ENCODE measurements at regions of chr1 and their contacts with region 1.

Region 1: DNA sequence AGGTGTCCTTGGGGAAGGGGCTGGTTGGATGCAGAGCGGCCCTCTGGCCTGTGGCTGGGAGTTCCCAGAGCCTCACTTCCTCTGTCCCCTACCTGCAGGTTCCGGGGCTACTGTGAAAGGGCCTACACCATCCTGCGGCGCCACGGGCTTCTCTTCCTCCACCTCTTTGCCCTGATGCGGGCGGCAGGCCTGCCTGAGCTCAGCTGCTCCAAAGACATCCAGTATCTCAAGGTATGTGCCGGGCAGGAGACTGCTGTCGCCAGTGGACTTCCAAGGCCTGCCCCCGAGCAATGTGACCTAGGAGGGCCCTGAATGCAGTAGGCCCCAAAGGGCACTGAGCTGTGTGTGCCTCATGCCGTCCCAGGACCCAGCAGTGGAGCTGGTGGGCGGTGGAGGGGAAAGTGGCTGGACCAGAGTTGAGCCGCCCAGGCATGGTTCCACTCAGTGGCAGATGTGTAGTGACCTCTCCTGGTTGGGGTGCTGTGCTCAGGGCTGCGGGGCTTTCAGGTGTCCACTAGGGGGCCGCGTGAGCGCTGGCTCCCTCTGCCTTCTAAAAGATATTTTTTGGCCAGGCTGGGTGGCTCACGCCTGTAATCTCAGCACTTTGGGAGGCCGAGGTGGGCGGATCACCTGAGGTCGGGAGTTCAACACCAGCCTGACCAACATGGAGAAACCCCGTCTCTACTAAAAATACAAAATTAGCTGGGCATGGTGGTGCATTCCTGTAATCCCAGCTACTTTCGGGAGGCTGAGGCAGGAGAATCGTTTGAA is 73.4 kb downstream of the PIK3CD start:
- DNase-seq: no peak
- H3K4me3 ChIP-seq: no peak overlapping the region
- CTCF ChIP-seq: peak; percentile 92

Region 2: GRCh38 chr1:9705337-9706093 is 19.4 kb before region 1 on chr1:
- CTCF ChIA-PET with region 1: interaction called, 21 read pairs
- POLR2A ChIA-PET with region 1: interaction called, 3 read pairs
- DNase-seq: no peak
- H3K4me3 ChIP-seq: no peak overlapping the region
- CTCF ChIP-seq: no peak

Region 3: GRCh38 chr1:9711466-9712020 is 13.3 kb before region 1 on chr1:
- CTCF ChIA-PET with region 1: interaction called, 14 read pairs
- POLR2A ChIA-PET with region 1: no interaction called
- DNase-seq: no peak
- H3K4me3 ChIP-seq: no peak overlapping the region
- CTCF ChIP-seq: no peak

Region 4: GRCh38 chr1:9746211-9746610 is 21.3 kb after region 1 on chr1:
- CTCF ChIA-PET with region 1: interaction called, 21 read pairs
- POLR2A ChIA-PET with region 1: no interaction called
- DNase-seq: no peak
- H3K4me3 ChIP-seq: no peak overlapping the region
- CTCF ChIP-seq: no peak

Region 5: GRCh38 chr1:9815150-9815549 is 90.3 kb after region 1 on chr1:
- CTCF ChIA-PET with region 1: no interaction called
- POLR2A ChIA-PET with region 1: no interaction called
- DNase-seq: no peak
- H3K4me3 ChIP-seq: no peak overlapping the region
- CTCF ChIP-seq: no peak